ENCODE measurements at regions of chr4 and their contacts with region 1.

Region 1: GRCh38 chr4:139083956-139084803 is 68.6 kb downstream of the NOCT start:
- DNase-seq: peak; percentile 93

Region 2: GRCh38 chr4:139030614-139031235 is 53.5 kb before region 1 on chr4:
- intact Hi-C with region 1: loop called (anchors 2 kb)
- DNase-seq: no peak

Region 3: DNA sequence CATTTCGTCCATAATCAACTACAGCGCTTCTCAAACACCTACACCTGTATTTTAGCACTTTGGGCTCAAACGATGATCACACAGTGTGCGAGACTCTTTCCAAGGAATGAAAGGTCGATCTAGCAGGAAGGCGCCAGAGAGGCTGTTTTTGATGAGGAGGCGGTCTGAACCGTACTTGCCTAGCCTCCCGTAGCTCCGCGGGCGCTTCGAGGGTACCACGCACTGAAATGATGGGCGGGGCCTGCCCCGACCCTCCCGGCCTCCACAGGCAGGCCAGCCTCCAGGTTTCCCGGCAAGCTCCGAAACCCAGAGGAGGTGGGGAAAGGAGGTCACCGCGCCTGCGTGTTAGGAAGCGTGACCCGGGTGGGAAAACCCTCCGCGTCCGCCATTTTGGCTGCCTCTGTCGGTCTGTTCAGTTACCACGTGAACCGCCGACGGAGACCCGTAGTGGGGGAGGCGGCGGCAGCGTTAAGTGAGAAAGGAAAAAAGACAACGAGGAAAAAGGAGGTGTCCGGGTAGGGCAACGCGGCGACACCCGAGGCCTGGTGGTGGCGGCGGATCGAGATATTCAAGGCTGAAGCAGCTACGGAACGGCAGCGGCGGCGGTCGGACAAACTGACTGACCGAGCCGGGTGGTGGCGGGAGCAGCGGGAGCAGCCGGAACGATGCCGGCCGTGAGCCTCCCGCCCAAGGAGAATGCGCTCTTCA is 217.1 kb after region 1 on chr4 and contains the start of gene NAA15:
- intact Hi-C with region 1: loop called (anchors 2 kb)
- DNase-seq: peak; percentile 99
- total RNA-seq, gene NAA15: 37.9 TPM

Region 4: DNA sequence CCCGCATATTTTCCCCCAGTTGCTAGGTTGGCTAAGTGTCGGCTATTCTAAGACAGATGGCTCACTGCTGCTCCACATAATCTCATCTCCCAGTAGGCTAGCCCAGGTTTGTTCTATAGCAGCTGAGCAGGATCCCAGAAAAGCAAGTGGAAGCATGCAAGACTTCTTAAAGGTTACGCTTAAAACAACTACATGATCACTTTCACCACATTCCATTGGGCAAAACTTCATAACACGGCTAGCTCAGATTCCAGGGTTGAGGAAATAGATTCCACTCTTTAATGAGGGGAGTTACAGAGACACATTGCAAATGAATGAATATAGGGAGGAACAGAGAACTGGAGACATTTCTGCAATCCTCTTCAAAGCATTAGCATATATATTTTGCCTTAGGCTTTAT is 356.8 kb after region 1 on chr4:
- intact Hi-C with region 1: no loop called
- DNase-seq: no peak